ENCODE measurements at regions of chr7 and their contacts with region 1.

Region 1: DNA sequence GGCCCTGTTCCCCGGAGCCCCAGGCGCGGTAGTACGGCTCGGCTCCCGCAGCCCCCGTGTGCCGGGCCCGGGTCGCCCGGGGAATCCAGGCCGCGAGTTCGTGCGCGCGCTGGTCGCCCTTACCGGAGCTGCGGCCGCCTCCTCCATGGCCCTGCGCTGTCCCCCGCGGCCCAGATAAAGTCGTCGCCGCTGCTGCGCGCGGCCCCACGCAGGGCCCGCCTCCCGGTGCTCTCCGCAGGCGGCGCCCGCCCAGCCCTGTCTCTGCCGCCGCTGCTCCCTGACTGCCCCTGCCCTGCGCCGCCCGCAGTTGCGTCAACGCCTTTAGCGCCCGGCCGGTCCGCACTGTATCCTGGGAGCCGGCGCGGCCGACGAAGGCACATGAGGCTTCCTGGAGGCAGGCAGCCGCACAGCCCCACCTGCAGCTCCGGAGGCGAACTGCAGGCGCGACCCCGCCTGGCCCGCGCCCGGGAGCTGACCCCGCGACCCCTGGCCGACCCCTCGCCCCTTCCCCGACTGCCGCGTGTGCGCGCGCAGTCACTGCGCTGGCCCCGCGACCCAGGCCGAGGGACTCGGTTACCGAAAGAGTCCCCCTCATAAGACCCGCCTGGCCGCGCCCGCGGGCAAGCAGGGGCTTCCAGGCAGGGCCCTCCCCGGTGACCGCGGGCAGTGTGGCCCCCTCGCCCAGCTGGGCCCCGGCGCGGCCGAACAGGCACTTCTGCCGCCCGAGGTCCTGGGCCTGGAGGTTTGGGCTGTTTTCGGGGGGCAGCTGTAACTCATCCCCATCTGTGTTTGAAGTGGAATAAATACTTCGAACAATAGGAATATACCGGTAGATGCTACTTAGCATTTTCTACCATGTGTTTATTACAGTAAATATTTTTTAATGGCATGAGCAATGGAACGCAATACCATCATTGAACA is 127.1 kb upstream of the ZNF746 start:
- DNase-seq: peak; percentile 83 to 93 (median 91)
- H3K4me3 ChIP-seq: peak overlapping the region; percentile 61 to 100 (median 90)
- H3K27ac ChIP-seq: peak overlapping the region in 57 of 59 donors; percentile 2 to 93 (median 84)
- H3K27me3 ChIP-seq: no peaks in the 10 kb centered on the region
- CTCF ChIP-seq: peak; percentile 88 to 100 (median 98)

Region 2: GRCh38 chr7:149261829-149262617 is 362.7 kb before region 1 on chr7 and contains the start of gene ZNF783:
- intact Hi-C with region 1: loop called in 1 of 2 experiments (anchors 2 kb)
- DNase-seq: peak; percentile 77 to 90 (median 83)
- H3K4me3 ChIP-seq: peak within 1 kb of the TSS; percentile 47 to 87 (median 74)
- H3K27ac ChIP-seq: peak within 1 kb of the TSS; percentile 43 to 94 (median 88)
- H3K27me3 ChIP-seq: no peaks in the 10 kb centered on the region
- CTCF ChIP-seq: peak; percentile 47 to 99 (median 82)
- total RNA-seq, gene ZNF783: 15.2 to 39.8 (median 23.8) TPM

Region 3: DNA sequence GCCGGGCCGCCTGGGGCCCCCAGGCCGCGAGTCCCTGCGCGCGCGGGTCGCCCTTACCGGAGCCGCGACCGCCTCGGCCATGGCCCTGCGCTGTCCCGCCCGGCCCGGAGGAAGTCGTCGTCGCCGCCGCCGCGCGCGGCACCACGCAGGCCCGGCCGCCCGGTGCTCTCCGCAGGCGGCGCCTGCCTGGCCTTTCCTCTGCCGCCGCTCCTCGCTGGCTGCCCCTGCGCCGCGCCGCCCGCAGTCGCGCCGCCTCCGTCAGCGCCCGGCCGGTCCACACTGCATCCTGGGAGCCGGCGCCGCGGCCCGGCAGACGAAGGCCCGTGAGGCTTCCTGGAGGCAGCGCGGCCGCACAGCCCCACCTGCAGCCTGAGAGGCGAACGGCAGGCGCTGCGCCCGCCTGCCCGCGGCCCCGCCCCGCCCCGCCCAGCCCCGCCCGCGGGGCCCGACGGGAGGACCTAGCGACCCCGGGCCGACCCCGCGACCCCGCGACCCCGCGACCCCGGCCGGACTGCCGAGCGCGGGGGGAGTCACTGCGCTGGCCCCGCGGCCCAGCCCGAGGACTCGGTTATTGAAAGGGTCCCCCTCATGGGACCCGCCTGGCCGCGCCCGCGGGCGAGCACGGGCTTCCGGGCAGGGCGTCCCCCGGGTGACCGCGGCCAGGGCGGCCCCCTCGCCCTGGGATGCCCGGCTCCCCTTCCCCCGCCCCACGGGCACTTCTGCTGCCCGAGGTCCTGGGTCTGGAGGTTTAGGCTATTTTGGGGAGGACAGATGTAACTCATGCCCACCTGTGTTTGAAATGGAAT is 127.0 kb before region 1 on chr7 and contains the start of gene ZNF746:
- intact Hi-C with region 1: loop called in 1 of 2 experiments (anchors 5 kb)
- DNase-seq: peak; percentile 53 to 85 (median 72)
- H3K4me3 ChIP-seq: peak within 1 kb of the TSS; percentile 48 to 83 (median 71)
- H3K27ac ChIP-seq: peak within 1 kb of the TSS in 49 of 59 donors; percentile 26 to 90 (median 69)
- H3K27me3 ChIP-seq: no peaks in the 10 kb centered on the region
- CTCF ChIP-seq: peak in 47 of 56 donors; percentile 6 to 76 (median 45)
- total RNA-seq, gene ZNF746: 17.9 to 38.3 (median 26.7) TPM

Region 4: DNA sequence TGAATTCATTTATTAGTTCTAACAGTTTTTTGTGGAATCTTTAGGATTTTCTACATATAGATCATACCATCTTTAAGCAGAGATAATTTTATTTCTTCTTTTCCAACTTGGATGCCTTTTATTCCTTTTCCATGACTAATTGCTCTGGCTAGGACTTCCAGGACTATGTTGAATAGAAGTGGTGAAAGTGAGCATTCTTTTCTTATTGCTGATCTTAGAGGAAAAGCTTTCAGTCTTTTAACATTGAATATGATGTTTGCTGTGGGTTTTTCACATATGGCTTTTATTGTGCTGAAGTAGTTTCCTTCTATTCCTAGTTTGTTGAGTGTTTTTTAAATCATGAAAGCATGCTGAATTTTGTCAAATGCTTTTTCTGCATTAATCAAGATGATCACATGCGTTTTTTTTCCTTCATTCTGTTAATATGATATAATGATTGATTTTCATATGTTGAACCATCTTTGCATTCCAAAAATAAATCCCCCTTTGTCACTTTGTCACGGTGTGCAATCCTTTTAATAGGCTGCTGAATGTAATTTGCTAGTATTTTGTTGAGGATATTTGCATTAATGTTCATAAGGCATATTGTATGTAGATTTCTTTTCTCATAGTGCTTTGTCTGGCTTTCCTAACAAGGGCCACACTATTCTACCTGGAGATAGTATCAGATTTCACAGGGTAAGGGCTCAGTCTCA is 55.8 kb after region 1 on chr7:
- intact Hi-C with region 1: no loop called
- DNase-seq: no peak
- H3K4me3 ChIP-seq: no peak overlapping the region
- H3K27ac ChIP-seq: no peak overlapping the region
- H3K27me3 ChIP-seq: peaks cover 0 to 4% (median 0%) of the 10 kb centered on the region in 45 donors
- CTCF ChIP-seq: no peak

Region 5: DNA sequence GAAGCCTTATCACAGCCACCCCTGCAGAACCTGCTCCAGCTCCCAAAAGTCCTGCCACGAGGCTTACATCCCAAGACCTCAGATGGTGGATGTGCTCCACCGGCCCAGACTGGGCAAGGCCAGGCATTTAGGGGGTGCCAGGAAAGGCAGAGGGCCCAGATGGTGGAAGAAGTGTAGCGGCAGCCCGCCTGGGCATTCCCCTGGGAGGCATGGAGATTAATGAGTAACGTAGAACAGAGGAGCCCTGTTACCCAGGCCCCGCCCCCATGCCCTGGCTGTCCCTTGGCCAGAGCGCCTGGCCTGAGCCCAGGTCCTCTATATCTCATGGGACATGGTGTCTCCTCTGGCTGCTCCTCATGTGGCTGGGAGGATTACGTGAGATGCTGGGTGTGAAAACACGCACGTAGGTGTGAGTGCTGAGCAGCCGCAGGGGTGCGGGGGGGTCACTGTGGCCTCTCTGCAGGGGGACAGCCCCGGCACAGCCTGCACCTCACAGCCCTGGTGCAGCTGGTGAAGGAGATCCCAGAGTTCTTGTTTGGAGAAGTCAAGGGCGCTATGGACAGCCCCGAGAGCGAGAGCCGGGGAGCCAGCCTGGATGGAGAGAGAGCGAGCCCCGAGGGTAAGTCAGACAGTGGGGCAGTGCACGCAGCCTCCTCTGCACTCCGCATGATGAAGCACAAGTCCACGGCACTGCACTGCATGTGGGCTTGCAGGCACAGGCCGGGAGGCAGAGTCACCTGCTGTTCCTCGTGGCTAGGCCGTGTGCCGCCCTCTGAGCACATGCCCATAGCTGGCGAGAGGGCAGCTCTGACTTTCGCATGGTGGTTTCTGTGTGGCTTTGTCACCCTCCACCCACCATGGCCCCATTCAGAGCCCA is 95.9 kb after region 1 on chr7:
- intact Hi-C with region 1: loop called in 1 of 2 experiments (anchors 5 kb)
- DNase-seq: peak; percentile 33 to 98 (median 91)
- H3K4me3 ChIP-seq: peak overlapping the region in 17 of 59 donors; percentile 3 to 42 (median 14)
- H3K27ac ChIP-seq: peak overlapping the region in 57 of 59 donors; percentile 14 to 89 (median 72)
- H3K27me3 ChIP-seq: no peaks in the 10 kb centered on the region
- CTCF ChIP-seq: peak in 17 of 56 donors; percentile 9 to 46 (median 23)

Region 6: DNA sequence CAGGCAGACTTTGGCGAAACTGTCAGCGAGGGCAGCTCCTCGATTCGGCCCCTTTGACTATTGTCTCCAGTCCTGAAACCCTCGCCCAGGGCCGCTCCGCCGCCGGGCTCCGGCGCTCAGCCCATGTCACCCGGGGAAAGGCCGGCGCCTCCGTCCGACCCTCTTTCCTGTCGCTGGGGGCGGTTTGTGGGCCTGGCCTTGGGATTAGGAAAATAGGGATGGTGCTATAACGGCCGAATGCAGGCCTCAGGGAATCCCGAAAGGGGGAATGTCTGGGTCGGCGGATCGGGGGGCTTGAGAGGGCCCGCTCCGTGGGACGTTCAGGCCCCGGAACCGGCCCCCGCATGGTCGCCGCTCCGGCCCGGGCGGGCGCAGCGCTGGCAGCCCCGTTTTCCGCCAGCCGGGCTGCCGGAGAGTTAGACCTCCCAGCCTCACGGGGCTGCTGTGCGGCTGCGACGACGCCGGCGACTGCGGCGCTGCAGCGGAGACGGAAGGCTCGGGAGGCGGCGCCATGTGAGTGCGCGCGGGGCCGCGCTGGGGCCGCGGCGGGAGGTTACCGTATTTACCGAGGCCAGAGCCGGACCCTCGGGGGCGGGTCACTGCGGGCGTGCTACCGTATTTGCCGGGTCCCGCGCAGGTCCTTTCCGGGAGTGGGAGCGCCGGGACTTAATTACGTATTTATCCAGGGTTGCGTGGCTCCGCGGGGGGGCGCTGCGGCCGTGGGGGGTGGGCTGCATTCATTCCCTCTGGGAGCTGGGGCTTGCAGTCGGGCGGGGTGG is 780.3 kb after region 1 on chr7:
- intact Hi-C with region 1: loop called in 1 of 2 experiments (anchors 10 kb)
- DNase-seq: peak; percentile 80 to 93 (median 90)
- H3K4me3 ChIP-seq: peak overlapping the region; percentile 62 to 91 (median 82)
- H3K27ac ChIP-seq: peak overlapping the region; percentile 79 to 99 (median 96)
- H3K27me3 ChIP-seq: no peaks in the 10 kb centered on the region
- CTCF ChIP-seq: peak in 52 of 56 donors; percentile 6 to 68 (median 46)